Sigmoid colon (tissue), 7 donors: ENCODE measurements at regions of chr22 and their contacts with region 1.

Region 1: DNA sequence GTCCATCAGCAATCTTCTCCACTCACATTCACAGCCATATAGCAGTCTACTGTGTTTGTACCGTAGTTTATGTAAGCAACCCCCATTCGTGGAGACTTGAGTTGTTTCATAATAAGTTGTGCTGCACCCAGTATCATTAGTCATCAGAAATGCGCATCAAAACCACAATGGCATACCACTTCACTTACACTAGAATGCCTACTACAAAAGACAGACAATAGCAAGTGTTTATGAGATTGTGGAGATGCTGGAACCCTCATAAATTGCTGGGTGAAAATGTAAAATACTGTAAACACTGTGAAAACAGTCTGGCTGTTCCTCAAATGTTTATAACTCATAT is 133.3 kb downstream of the ATXN10 start:
- DNase-seq: no peak
- H3K4me3 ChIP-seq: no peak overlapping the region
- H3K27ac ChIP-seq: peak overlapping the region in 3 of 4 donors; percentile 60 to 76 (median 72)
- H3K4me1 ChIP-seq: peaks cover 0 to 38% (median 28%) of the 10 kb centered on the region in 4 donors
- H3K27me3 ChIP-seq: no peaks in the 10 kb centered on the region
- CTCF ChIP-seq: no peak
- EP300 ChIP-seq: peak in 1 of 4 donors; percentile 11
- POLR2A ChIP-seq: no peak

Region 2: GRCh38 chr22:45688606-45689080 is 116.3 kb before region 1 on chr22:
- intact Hi-C with region 1: no loop called
- DNase-seq: no peak
- H3K4me3 ChIP-seq: no peak overlapping the region
- H3K27ac ChIP-seq: peak overlapping the region; percentile 5 to 63 (median 43)
- H3K4me1 ChIP-seq: peaks cover 0 to 91% (median 67%) of the 10 kb centered on the region in 4 donors
- H3K27me3 ChIP-seq: no peaks in the 10 kb centered on the region
- CTCF ChIP-seq: no peak
- EP300 ChIP-seq: no peak
- POLR2A ChIP-seq: no peak

Region 3: DNA sequence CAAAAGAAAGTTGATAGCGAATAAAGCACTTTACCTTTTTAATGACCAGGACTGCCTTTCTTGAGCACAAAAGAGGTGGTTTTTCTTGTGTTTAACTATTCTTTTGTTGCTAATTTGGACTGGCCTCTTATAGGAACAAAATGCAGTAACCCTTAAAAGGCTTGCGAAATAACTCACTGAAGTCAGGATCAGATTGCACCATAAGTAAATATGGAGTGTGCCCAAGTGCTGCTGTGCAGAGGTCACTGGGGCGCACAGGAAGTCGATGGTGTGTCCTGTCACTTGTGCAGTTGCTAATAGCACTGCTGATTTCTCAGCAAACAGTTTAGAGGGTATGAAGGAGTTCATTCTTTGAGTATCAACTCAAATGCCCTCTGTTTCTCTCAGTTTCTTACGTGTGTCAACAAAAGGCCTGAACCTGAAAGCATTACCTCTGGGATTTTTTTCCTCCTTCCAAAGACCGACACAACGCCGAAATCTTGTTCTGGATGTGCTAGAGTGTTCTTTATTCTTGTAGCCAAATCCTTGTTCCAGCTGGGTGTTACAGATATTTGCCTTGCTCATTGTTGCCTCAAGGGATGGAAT is 62.0 kb before region 1 on chr22:
- intact Hi-C with region 1: no loop called
- DNase-seq: no peak
- H3K4me3 ChIP-seq: no peak overlapping the region
- H3K27ac ChIP-seq: no peak overlapping the region
- H3K4me1 ChIP-seq: peaks cover 0 to 6% (median 0%) of the 10 kb centered on the region in 4 donors
- H3K27me3 ChIP-seq: no peaks in the 10 kb centered on the region
- CTCF ChIP-seq: no peak
- EP300 ChIP-seq: no peak
- POLR2A ChIP-seq: no peak

Region 4: GRCh38 chr22:45763236-45763624 is 41.7 kb before region 1 on chr22:
- intact Hi-C with region 1: loop called (anchors 5 kb)
- DNase-seq: no peak
- H3K4me3 ChIP-seq: no peak overlapping the region
- H3K27ac ChIP-seq: peak overlapping the region in 3 of 4 donors; percentile 46 to 55 (median 55)
- H3K4me1 ChIP-seq: peaks cover 0 to 54% (median 49%) of the 10 kb centered on the region in 4 donors
- H3K27me3 ChIP-seq: no peaks in the 10 kb centered on the region
- CTCF ChIP-seq: no peak
- EP300 ChIP-seq: no peak
- POLR2A ChIP-seq: no peak